PC-9 (cell line): ENCODE measurements at regions of chr4 and their contacts with region 1.

Region 1: DNA sequence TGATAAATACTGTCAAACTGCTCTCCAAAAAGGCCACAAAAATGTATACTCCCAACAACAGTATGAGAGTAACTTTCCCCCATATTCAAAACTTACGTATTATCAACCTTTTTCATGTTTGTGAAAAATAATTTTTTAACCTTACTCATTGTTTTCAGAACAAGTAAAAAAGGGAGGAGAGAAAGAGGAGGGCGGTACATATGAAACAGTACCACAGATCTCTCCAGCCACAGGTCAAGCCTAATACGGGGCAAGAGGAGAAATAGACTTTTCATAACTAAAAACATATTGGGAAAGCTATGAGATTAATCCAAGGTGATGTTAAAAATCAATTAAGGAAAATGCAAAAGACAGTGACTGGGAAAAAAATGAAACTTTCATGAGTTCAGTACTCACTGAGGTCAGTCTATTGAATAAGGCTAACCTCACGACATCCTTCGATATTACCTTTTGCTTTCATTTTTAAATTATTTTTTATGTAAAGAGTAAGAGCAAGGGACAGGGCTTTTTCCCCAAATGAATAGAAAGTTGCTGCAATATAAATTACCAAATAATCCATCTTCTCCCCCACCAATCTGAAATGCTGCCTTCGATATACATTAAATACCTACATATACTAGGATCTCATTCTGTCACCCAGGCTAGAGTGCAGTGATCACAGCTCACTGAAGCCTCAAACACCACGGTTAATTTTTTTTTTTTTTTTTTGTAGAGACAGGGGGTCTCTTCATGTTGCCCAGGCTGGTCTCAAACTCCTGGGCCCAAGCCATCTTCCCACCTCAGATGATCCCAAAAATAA is 25.3 kb downstream of the FBXW7 start:
- DNase-seq: no peak
- H3K4me3 ChIP-seq: no peak overlapping the region
- H3K27ac ChIP-seq: no peak overlapping the region
- H3K4me1 ChIP-seq: no peaks in the 10 kb centered on the region
- H3K27me3 ChIP-seq: no peaks in the 10 kb centered on the region
- CTCF ChIP-seq: no peak

Region 2: DNA sequence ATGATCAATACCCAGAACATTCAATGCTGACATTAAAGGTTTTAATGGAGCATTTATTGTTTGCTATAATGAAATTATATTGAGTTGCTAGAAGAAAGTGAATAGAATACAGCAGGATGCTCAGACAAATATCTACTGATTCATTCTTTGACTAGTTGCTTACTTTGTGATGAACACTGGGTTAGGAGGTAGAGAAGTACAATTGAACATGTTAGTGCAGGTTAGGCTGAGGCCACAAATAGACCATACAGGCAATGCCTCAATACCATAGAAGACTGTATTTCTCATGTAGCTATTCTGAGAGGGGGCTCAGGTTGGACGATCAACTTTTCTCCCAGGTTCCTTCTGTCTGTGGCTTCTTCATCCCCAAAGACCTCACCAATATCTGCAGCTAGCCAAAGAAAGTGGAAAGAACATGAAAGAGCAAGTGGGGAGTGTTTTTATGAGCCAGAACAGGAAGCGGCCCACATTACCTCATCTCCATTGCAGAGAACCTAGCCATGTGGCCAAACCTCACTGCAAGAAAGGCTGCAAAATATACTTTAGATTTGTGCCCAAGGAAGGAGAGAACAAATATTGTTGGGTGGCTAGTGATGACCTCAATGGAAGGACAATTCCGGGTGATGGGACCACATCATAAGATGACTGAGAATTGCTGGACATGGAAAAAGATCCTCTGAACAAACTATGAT is 569.5 kb before region 1 on chr4:
- CTCF ChIA-PET with region 1: no interaction called
- POLR2A ChIA-PET with region 1: no interaction called
- intact Hi-C with region 1: no loop called
- DNase-seq: no peak
- H3K4me3 ChIP-seq: no peak overlapping the region
- H3K27ac ChIP-seq: no peak overlapping the region
- H3K4me1 ChIP-seq: no peaks in the 10 kb centered on the region
- H3K27me3 ChIP-seq: no peaks in the 10 kb centered on the region
- CTCF ChIP-seq: no peak

Region 3: DNA sequence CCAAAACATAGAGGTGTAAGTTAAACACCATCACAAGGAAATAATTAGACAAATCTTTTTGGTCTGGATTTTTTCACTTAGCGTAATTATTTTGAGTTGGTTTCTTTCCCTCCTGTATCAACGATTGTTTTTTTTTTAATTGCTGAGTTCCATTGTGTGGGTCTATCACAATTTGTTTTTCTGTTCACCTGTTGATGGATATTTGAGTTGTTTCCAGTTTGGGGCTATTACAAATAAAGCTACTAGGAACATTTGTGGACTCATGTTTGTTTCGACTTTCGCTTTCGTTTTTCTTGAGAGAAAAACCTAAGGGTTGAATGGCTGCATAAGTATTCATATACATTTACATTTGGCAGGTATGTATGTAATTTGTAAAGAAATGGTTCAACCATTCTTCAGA is 45.7 kb after region 1 on chr4:
- CTCF ChIA-PET with region 1: no interaction called
- POLR2A ChIA-PET with region 1: no interaction called
- intact Hi-C with region 1: no loop called
- DNase-seq: no peak
- H3K4me3 ChIP-seq: peak overlapping the region; percentile 39; the same call in 1 of the 2 replicates
- H3K27ac ChIP-seq: no peak overlapping the region
- H3K4me1 ChIP-seq: no peaks in the 10 kb centered on the region
- H3K27me3 ChIP-seq: no peaks in the 10 kb centered on the region
- CTCF ChIP-seq: no peak

Region 4: DNA sequence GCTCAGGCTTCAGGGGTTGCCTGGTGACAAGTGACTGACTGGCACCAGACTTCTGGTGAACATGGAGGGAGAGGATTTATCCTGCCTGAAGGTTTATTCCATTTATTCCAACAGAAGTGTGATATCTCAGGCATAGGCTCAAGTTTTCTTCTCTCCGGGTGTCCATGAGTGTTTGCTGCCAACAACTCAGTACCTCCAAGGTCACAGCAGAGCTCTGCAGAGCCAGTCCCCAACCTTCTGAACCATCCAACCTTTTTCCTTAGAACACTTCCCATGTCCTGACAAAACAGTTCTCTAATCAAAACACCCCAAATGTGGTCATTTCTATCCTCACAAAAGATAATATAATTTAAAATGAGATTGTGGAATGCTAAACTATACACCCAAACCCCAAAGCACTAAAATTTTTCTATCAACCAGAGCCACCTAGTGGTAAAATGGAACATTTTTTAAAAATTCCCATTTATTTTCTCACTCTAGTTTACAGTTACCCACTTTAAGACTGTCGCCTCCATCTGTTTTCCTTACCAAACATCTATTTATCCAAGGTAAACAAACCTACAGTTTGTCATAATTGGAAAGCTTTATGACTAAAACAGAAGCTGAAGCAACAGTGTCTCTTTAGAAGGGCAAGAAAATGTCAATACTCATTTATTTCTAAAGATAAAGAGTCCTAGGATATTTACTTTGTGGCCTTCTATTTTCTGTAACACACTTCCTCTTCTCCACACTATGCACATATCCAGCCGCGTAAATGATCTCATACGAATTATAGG is 129.7 kb after region 1 on chr4:
- CTCF ChIA-PET with region 1: interaction called, 13 read pairs
- POLR2A ChIA-PET with region 1: no interaction called
- intact Hi-C with region 1: no loop called
- DNase-seq: peak in 1 of 2 experiments; percentile 37
- H3K4me3 ChIP-seq: no peak overlapping the region
- H3K27ac ChIP-seq: no peak overlapping the region
- H3K4me1 ChIP-seq: no peaks in the 10 kb centered on the region
- H3K27me3 ChIP-seq: no peaks in the 10 kb centered on the region
- CTCF ChIP-seq: peak; percentile 79